ENCODE measurements at regions of chr9 and their contacts with region 1.

Region 1: DNA sequence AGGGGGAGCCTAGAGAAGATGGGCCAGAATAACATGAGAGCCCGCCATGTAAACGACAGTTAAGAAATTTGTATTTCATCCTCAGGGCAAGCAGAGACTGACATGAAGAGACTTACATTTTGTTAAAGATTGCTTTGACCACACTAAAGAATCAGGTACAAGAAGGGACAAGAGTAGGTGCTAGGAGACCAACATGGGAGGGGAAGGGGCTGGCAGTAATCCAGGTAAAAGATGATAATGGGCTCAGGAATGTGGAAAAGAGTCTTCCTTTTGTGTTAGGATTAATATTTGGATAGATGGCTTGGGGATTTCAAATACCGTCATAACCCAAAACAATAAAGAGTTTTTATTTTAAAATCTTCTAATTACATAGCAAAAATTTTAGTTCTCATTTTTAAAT is 137.3 kb downstream of the ZNF462 start:
- DNase-seq: no peak
- ATAC-seq: no peak

Region 2: GRCh38 chr9:106980551-106981101 is 19.6 kb before region 1 on chr9:
- intact Hi-C with region 1: loop called (anchors 1 kb)
- DNase-seq: no peak
- ATAC-seq: no peak

Region 3: DNA sequence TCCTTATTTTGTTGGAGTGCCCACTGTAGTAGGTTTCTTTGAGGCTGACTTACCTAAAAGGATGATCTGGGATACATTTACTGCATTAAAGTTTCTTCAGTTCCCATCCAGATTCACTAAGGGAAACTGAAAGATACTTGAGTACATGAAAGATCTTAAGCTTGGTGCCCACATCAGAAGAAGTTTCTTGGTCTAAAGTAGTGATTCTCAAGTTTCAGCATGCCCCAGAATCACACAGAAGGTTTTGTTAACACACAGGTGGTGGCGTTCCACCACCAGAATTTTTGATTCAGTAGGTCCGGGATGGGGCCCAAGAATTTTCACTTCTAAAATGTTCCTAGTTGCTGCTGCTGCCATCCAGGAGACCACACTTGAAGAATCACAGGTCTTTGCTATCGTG is 33.7 kb after region 1 on chr9:
- intact Hi-C with region 1: no loop called
- DNase-seq: no peak
- ATAC-seq: no peak

Region 4: DNA sequence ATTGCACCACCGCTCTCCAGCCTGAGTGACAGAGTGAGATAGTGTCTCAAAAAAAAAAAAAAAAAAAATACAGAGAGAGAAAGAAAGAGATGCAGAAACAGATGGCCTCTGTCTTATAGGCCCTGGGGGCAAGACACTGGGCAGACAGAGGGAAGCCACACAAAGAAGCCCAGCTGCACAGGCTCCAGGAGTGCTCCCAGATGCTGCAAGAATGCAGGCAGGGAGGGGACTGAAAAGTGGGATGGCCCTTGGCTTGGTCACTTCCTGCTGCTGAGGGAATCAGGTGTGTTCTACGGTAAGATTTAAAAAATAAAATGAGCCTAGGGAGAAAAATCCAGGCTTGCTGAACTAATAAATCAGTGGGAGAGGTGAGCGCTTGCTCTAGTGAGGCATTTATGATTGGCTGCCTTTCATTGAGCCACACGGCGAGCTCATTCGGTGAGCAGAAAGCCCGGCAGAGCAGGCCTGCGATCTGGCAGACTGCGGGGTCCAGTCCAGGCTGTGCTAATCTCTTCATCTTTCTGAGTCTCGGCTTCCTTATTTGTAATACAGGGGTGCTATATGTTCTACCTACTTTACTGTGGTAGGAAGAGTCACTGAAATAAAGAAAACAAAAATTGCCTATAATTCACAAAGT is 363.4 kb after region 1 on chr9:
- intact Hi-C with region 1: no loop called
- DNase-seq: no peak
- ATAC-seq: peak; percentile 66